ENCODE measurements at regions of chr22 and their contacts with region 1.

Region 1: GRCh38 chr22:37428649-37429586 is 1.6 kb upstream of the ELFN2 start:
- DNase-seq: peak; percentile 35
- ATAC-seq: peak; percentile 68
- H3K4me3 ChIP-seq: no peak overlapping the region
- H3K27ac ChIP-seq: no peak overlapping the region
- H3K4me1 ChIP-seq: peaks cover 26% of the 10 kb centered on the region
- H3K27me3 ChIP-seq: peaks cover 16 to 79% of the 10 kb centered on the region in 2 experiments
- CTCF ChIP-seq: peak; percentile 78
- EP300 ChIP-seq: no peak
- POLR2A ChIP-seq: no peak
- RAD21 ChIP-seq: peak; percentile 48; the same call in 1 of the 2 replicates

Region 2: DNA sequence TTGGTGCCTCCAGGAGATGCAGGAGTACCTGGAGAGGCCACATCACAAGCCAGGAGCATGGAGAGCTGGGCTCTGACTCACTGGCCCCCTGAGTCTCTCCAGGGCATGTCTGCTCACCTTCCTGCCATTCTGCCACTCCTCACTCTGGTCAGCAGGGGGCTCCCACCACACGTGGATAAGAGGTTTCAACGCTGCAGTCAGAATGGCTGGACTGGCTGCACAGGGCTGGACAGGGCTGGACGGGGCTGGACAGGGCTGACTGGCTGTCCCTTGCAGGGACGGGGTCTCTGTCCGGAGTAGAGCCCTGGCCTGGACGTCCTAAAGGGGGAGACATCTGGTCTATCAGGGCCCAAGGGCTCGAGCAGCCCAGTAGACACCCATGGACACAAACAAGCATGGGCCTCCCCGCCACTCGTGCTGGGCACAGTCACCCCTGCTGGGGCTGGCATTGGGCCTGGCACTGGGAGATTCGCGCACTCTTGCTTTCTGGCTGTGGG is 112.0 kb before region 1 on chr22:
- CTCF ChIA-PET with region 1: interaction called, 17 read pairs
- POLR2A ChIA-PET with region 1: no interaction called
- in situ Hi-C with region 1: no loop called
- intact Hi-C with region 1: loop called (anchors 1 kb)
- DNase-seq: peak; percentile 83
- ATAC-seq: peak; percentile 89
- H3K4me3 ChIP-seq: no peak overlapping the region
- H3K27ac ChIP-seq: no peak overlapping the region
- H3K4me1 ChIP-seq: peaks cover 18% of the 10 kb centered on the region
- H3K27me3 ChIP-seq: peaks cover 7 to 14% of the 10 kb centered on the region in 2 experiments; a peak in 3 of 5 replicates
- CTCF ChIP-seq: peak; percentile 99
- EP300 ChIP-seq: no peak
- POLR2A ChIP-seq: no peak
- RAD21 ChIP-seq: peak; percentile 96

Region 3: GRCh38 chr22:37498289-37498909 is 69.5 kb after region 1 on chr22:
- CTCF ChIA-PET with region 1: no interaction called
- POLR2A ChIA-PET with region 1: no interaction called
- in situ Hi-C with region 1: no loop called
- intact Hi-C with region 1: no loop called
- DNase-seq: peak; percentile 50
- ATAC-seq: peak; percentile 14; the same call in 2 of the 3 replicates
- H3K4me3 ChIP-seq: no peak overlapping the region
- H3K27ac ChIP-seq: no peak overlapping the region
- H3K4me1 ChIP-seq: peaks cover 45% of the 10 kb centered on the region
- H3K27me3 ChIP-seq: no peaks in the 10 kb centered on the region
- CTCF ChIP-seq: peak; percentile 97
- EP300 ChIP-seq: no peak
- POLR2A ChIP-seq: no peak
- RAD21 ChIP-seq: peak; percentile 90

Region 4: GRCh38 chr22:37538590-37539357 is 109.9 kb after region 1 on chr22:
- CTCF ChIA-PET with region 1: no interaction called
- POLR2A ChIA-PET with region 1: no interaction called
- in situ Hi-C with region 1: no loop called
- intact Hi-C with region 1: no loop called
- DNase-seq: peak; percentile 88
- ATAC-seq: peak; percentile 98
- H3K4me3 ChIP-seq: peak overlapping the region in 1 of 3 experiments; percentile 32; a peak in 2 of 6 replicates
- H3K27ac ChIP-seq: no peak overlapping the region
- H3K4me1 ChIP-seq: peaks cover 77% of the 10 kb centered on the region
- H3K27me3 ChIP-seq: 0 out of 5 replicates have a peak, but pooled peaks cover 0 to 2% of the 10 kb centered on the region in 2 experiments
- CTCF ChIP-seq: peak; percentile 100
- EP300 ChIP-seq: peak; percentile 27 to 36; a peak in 2 of 4 replicates
- POLR2A ChIP-seq: no peak
- RAD21 ChIP-seq: peak; percentile 99

Measured in HepG2 (cell line).